Caco-2 (cell line): ENCODE measurements at regions of chr7 and their contacts with region 1.

Region 1: DNA sequence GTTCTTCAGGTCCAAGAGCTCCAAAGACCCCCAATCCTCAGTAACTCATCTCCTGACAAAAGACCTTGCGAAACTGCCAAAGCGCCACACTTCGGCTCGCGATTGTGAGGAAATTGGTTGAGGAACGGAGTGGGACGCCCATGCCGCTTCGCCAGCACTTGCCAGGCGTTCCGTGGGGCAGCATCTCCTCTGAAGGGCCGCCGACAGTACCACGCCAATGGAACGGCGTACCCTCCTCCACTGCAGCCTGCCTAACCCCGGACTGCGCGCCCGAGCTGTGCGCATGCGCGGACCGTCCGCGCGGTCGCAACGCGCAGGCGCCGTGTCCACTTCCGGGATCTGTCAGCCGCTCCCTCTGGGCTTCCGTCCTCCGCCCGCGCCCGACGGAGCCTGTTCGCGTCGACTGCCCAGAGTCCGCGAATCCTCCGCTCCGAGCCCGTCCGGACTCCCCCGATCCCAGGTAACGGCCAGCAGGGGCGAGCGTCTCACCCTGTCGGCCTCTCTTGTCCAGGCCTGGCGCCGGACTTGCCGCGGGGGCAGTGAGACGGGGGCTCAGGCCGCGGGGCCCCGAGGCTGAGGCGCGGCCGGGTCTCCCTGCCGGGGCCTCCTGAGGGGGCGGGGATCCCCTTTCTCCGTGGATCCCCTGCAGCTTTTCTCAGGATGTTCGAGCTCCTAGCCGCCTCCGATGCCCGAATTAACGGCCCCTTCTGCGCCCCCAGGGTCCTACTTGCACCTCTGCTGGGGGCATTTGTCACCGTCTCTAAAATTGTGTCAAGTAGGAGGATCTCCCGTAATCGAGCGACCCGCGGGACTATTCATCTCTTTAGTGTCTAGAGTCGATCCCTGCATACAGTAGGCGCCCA is at the start of gene ARPC1A:
- DNase-seq: peak; percentile 94 to 96
- H3K4me3 ChIP-seq: peak within 1 kb of the TSS; percentile 73
- H3K4me3 Mint-ChIP-seq: peak within 1 kb of the TSS; percentile 96
- H3K27ac Mint-ChIP-seq: peak within 1 kb of the TSS; percentile 91
- H3K4me1 ChIP-seq: peaks cover 8% of the 10 kb centered on the region
- H3K4me1 Mint-ChIP-seq: peaks cover 15% of the 10 kb centered on the region
- H3K27me3 ChIP-seq: no peaks in the 10 kb centered on the region
- H3K27me3 Mint-ChIP-seq: no peaks in the 10 kb centered on the region
- CTCF ChIP-seq: peak in 1 of 2 experiments; percentile 30
- total RNA-seq, gene ARPC1A: 190 and 201 TPM in 2 replicates

Region 2: GRCh38 chr7:99270683-99271082 is 55.1 kb before region 1 on chr7:
- CTCF ChIA-PET with region 1: no interaction called
- POLR2A ChIA-PET with region 1: no interaction called
- intact Hi-C with region 1: no loop called
- DNase-seq: peak in 1 of 2 experiments; percentile 24
- H3K4me3 ChIP-seq: no peak overlapping the region
- H3K4me3 Mint-ChIP-seq: no peak overlapping the region
- H3K27ac Mint-ChIP-seq: no peak overlapping the region
- H3K4me1 ChIP-seq: 0 out of 2 replicates have a peak, but pooled peaks cover 6% of the 10 kb centered on the region
- H3K4me1 Mint-ChIP-seq: no peaks in the 10 kb centered on the region
- H3K27me3 ChIP-seq: no peaks in the 10 kb centered on the region; the same call in 1 of the 2 replicates
- H3K27me3 Mint-ChIP-seq: no peaks in the 10 kb centered on the region
- CTCF ChIP-seq: peak; percentile 6 to 18

Region 3: GRCh38 chr7:99386584-99387238 is 60.9 kb after region 1 on chr7:
- CTCF ChIA-PET with region 1: no interaction called
- POLR2A ChIA-PET with region 1: no interaction called
- intact Hi-C with region 1: loop called (anchors 5 kb)
- DNase-seq: peak in 1 of 2 experiments; percentile 43
- H3K4me3 ChIP-seq: no peak overlapping the region
- H3K4me3 Mint-ChIP-seq: no peak overlapping the region
- H3K27ac Mint-ChIP-seq: no peak overlapping the region
- H3K4me1 ChIP-seq: no peaks in the 10 kb centered on the region
- H3K4me1 Mint-ChIP-seq: no peaks in the 10 kb centered on the region
- H3K27me3 ChIP-seq: no peaks in the 10 kb centered on the region
- H3K27me3 Mint-ChIP-seq: no peaks in the 10 kb centered on the region
- CTCF ChIP-seq: peak; percentile 31 to 37